ENCODE measurements at regions of chr6 and their contacts with region 1.

Region 1: GRCh38 chr6:13908955-13909381 is 15.8 kb upstream of the RNF182 start:
- H3K4me3 ChIP-seq: no peak overlapping the region
- H3K27ac ChIP-seq: no peak overlapping the region
- H3K4me1 ChIP-seq: peaks cover 3% of the 10 kb centered on the region; the same call in 1 of the 2 replicates
- CTCF ChIP-seq: peak; percentile 68; the same call in 1 of the 2 replicates

Region 2: DNA sequence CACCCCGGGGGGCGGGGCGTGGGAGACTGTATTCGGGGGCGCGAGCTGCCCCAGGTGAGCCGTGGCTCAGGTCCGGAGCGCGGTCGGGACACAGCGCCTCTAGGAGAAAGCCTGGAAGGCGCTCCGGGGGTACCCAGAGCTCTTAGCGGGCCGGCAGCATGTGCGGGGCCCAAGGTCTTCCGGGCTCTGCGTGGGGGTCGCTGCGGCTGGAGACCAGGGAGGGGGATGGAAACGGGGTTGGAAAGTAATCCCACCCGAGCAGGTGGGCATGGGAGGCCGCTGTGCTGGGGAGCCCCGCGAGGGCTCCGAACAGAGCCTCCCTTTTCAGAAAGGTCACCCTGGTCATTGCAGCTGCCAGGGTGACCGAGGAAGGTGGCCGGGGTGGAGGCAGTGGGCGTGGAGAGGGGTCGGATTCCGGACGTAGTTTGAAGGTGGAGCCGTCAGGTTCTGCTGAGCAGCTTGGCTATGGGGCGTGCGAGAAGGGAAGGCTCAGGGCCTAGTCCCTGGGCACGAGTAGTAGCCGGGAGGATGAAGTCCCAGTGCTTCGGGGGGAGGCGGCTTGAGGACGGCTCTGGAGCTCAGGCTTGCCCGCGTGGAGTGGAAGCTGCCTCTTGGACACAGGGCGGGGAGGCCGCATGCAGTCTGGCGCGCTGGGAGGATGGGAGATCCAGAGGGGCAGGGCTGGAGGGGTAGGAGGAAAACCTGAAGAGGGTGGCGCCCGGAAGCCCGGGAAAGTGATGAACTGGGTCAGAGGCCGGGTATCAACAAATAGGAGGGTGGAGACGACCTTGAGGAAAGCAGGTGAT is 334.2 kb before region 1 on chr6 and contains the start of gene SIRT5:
- CTCF ChIA-PET with region 1: no interaction called
- POLR2A ChIA-PET with region 1: no interaction called
- H3K4me3 ChIP-seq: peak within 1 kb of the TSS; percentile 86
- H3K27ac ChIP-seq: peak within 1 kb of the TSS; percentile 93
- H3K4me1 ChIP-seq: 0 out of 2 replicates have a peak, but pooled peaks cover 3% of the 10 kb centered on the region
- CTCF ChIP-seq: peak; percentile 66

Region 3: DNA sequence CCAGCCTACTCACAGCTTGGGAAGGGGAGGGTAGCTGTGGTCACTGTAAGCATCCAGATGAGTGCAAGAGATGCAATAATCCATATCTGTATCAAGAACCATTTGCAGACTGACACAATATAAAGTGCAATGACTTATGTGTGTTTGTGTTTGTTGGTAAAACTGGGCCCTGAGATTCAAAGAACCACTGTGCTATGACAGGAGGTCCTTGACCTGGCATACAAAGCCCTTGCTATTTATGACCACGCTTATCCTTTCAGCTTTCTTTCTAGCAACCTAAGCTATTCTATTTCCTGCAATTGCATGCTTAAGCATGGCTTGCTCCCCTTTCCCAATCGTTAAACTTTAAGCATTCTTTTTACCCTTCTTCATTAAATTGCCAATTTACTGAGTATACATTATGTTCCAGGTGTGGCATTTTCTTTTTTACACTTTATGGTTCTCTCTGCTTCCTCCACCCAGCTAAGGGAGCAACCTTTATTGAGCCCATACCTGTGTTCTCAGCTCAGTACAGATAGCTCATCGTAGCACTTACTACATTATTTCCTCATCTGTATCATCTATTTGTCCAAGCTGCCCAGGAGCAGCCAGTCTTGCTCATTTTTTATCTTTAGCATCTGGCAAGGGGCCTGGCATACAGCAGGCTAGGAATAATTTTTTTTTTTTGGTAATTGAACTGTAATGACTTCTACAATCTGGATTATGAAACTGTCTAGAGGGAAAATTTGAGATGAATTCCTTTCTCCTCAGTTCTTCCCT is 98.1 kb before region 1 on chr6:
- CTCF ChIA-PET with region 1: no interaction called
- POLR2A ChIA-PET with region 1: no interaction called
- H3K4me3 ChIP-seq: no peak overlapping the region
- H3K27ac ChIP-seq: no peak overlapping the region
- H3K4me1 ChIP-seq: peaks cover 5% of the 10 kb centered on the region; the same call in 1 of the 2 replicates
- CTCF ChIP-seq: no peak

Region 4: DNA sequence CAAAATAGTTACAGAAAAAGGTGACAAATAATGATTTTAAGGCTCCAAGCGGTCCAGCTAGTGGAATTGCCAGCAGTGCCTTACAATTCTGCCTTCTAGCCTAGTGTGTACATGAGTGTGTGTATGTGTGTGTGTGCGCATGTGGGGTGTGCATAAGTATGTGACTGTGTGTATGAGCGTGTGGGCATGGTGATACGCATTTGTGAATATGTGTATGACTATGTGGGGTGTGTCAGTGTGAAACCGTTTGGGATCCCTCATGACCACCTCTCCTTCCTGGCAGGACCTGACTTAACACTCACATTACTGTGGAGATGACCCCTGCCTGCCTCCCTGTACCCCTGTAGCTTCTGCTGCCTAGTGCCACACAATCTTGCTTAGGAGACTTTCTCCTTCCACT is 24.6 kb before region 1 on chr6:
- CTCF ChIA-PET with region 1: interaction called, 14 read pairs
- POLR2A ChIA-PET with region 1: no interaction called
- H3K4me3 ChIP-seq: no peak overlapping the region
- H3K27ac ChIP-seq: no peak overlapping the region
- H3K4me1 ChIP-seq: no peaks in the 10 kb centered on the region
- CTCF ChIP-seq: no peak

Region 5: DNA sequence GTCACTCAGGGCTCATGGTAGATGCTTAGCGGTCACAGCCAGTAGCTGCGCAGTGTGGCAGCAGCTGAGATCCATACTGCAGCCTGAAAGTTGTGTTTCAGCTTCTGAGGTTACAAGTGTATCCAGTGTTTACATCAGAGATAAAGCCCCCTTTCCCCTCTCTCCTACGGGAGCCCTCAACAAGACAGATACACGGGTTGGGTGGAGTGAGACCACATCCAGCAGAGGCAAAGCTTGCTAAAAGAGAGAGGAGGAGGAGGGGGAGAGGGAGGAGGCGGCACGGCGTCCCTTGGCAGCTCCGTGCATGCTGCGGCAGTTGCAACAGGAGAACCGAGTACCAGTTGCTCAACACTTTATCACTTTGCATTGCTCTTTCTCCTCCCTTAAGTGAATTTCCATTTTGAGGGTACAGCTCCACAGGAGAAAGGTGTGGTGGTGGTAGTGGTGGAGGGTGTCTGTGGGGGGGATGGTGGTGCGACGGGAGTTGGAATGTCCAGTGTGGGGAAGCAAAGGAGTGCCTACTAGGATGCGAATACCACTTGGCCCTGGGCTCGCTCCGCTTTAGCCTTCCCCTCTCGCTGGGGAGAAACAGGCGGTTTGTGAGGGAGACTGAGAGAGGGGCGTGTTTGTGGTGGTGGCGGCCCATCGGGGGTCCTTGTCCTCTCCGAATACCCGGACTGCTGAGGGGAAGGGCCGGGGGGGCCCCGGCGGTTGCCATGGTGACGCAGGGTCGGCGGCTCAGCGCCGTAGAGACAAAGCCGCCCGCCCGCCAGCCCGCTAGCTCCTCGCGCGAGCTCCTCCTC is 15.4 kb after region 1 on chr6:
- CTCF ChIA-PET with region 1: interaction called, 94 read pairs
- POLR2A ChIA-PET with region 1: interaction called, 15 read pairs
- H3K4me3 ChIP-seq: peak overlapping the region; percentile 73
- H3K27ac ChIP-seq: peak overlapping the region; percentile 40
- H3K4me1 ChIP-seq: no peaks in the 10 kb centered on the region
- CTCF ChIP-seq: no peak

Region 6: DNA sequence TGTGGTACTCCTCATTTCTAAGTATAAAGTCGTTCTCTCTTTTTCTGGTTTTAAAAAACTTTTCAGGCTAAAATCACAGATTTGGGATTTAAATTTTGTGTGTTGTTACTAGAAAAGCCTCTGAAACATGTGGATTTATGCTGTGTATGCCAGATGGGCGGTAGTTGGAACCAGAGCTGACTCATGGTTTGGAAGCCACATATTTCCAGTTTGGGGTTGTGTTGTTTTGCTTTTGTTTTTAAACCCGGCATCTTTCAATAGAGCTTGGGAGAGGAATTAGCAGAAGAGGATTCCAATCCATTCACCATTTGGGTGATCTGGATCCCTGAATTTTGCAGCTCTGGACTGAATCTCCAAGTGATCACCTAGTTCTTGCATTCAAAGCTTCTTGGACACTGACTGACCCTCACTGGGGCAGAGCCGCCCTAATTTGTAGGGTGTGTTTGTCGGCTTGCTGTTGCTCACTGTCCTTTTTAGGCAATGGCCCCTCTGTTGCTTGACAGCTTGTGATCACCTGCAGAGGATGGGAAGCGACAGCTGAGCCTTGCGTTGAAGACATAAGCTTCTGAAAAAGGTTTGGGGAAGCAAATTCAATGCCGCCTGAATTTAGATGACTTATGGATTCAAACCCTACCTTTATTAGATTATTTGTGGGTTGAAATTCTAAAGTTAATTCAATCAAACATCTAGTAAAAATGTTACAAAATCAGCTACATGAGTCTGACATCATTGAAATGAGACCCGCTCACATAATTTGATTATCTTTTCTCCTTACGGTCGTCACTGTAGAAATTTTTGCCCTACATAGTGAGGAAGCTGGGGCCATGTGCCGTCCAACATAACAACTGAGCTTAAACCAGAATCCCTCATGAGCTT is 128.7 kb after region 1 on chr6:
- CTCF ChIA-PET with region 1: interaction called, 61 read pairs
- POLR2A ChIA-PET with region 1: no interaction called
- H3K4me3 ChIP-seq: no peak overlapping the region
- H3K27ac ChIP-seq: no peak overlapping the region
- H3K4me1 ChIP-seq: no peaks in the 10 kb centered on the region
- CTCF ChIP-seq: no peak

Region 7: DNA sequence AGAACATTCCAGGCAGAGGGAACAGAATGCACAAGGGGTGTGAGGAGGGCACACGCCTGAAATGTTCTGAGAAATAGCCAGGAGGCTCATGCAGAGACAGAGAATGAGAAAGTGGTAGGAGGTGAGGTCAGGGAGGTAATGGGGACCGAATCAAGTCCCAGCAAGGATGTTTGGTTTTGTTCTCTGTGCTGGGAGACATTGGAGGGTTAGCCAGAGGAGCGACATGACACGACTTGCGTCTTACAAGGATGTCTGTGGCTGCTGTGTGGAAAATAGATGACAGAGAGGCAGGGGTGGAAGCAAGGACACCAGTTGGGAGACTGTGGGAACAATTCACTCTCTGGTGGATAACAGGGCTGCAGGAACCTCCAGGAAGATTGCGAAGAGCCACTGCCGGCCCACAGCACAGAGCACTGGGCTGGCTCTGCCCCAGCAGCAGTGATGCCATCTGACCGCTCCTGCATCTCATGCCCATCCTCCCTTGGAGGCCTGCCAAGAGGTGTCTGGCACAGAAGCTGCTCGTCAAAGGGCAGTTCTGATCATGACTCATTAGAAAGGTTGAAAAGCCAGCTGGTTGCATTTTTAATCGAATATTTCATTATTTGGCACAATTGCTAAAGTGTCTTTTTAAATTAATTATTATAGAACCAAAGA is 150.9 kb after region 1 on chr6:
- CTCF ChIA-PET with region 1: interaction called, 353 read pairs
- POLR2A ChIA-PET with region 1: no interaction called
- H3K4me3 ChIP-seq: no peak overlapping the region
- H3K27ac ChIP-seq: no peak overlapping the region
- H3K4me1 ChIP-seq: no peaks in the 10 kb centered on the region
- CTCF ChIP-seq: no peak

Region 8: GRCh38 chr6:14075095-14075503 is 166.1 kb after region 1 on chr6:
- CTCF ChIA-PET with region 1: interaction called, 353 read pairs
- POLR2A ChIA-PET with region 1: no interaction called
- H3K4me3 ChIP-seq: peak overlapping the region; percentile 1; the same call in 1 of the 2 replicates
- H3K27ac ChIP-seq: no peak overlapping the region
- H3K4me1 ChIP-seq: no peaks in the 10 kb centered on the region
- CTCF ChIP-seq: no peak